ENCODE measurements at regions of chr1 and their contacts with region 1.

Region 1: DNA sequence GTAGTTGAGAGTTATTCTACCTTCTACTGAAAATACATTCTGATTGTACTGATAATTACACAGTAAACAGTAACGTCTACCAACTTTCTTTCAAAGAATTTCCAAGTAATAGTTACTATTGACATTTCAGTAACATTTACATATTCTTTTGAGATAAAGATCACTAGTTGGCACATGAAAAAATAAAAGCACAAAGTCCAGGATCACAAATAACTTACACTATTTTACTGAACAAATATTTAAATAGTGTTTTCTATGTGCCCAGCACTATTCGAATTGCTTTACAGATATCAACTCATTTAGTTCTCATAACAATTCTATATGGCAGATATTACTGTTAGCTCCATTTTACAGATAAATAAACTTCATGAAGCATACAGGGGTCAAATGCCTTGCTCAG is 126.4 kb downstream of the TTLL7 start:
- DNase-seq: no peak
- ATAC-seq: no peak
- H3K4me3 ChIP-seq: no peak overlapping the region
- H3K27ac ChIP-seq: no peak overlapping the region
- H3K4me1 ChIP-seq: no peaks in the 10 kb centered on the region
- H3K27me3 ChIP-seq: no peaks in the 10 kb centered on the region
- CTCF ChIP-seq: no peak
- EP300 ChIP-seq: no peak
- POLR2A ChIP-seq: no peak
- RAD21 ChIP-seq: no peak

Region 2: DNA sequence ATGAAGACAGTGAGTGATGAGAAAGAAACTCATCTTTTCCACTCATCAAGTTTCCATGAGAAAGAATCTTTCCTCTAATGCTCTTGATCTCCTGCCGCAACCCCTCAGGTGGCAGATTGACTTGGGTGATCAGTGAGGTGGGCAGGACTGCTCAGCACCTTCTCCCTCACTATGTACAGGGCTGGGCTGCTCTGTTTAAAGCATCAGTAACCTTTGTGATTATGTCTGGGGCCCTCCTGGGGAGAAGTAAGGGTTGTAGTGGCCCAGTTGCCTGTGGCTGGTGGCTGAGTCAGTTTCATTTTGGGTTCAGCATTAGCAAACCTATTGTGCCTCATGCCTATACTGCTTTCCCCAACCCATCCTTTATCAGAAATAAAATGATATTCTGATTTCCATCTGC is 239.6 kb before region 1 on chr1:
- CTCF ChIA-PET with region 1: no interaction called
- POLR2A ChIA-PET with region 1: no interaction called
- in situ Hi-C with region 1: no loop called
- intact Hi-C with region 1: no loop called
- DNase-seq: no peak
- ATAC-seq: no peak
- H3K4me3 ChIP-seq: no peak overlapping the region
- H3K27ac ChIP-seq: no peak overlapping the region
- H3K4me1 ChIP-seq: no peaks in the 10 kb centered on the region
- H3K27me3 ChIP-seq: no peaks in the 10 kb centered on the region
- CTCF ChIP-seq: no peak
- EP300 ChIP-seq: no peak
- POLR2A ChIP-seq: no peak
- RAD21 ChIP-seq: no peak

Region 3: GRCh38 chr1:83910461-83910860 is 37.9 kb after region 1 on chr1:
- CTCF ChIA-PET with region 1: no interaction called
- POLR2A ChIA-PET with region 1: no interaction called
- in situ Hi-C with region 1: no loop called
- intact Hi-C with region 1: loop called (anchors 1 kb)
- DNase-seq: no peak
- ATAC-seq: no peak
- H3K4me3 ChIP-seq: no peak overlapping the region
- H3K27ac ChIP-seq: no peak overlapping the region
- H3K4me1 ChIP-seq: no peaks in the 10 kb centered on the region
- H3K27me3 ChIP-seq: no peaks in the 10 kb centered on the region
- CTCF ChIP-seq: no peak
- EP300 ChIP-seq: no peak
- POLR2A ChIP-seq: no peak
- RAD21 ChIP-seq: no peak